Mammary epithelial cell (primary cell): ENCODE measurements at regions of chr14 and their contacts with region 1.

Region 1: GRCh38 chr14:103500148-103500990 is 22.3 kb downstream of the CKB start:
- DNase-seq: peak; percentile 60
- H3K4me3 ChIP-seq: no peak overlapping the region
- H3K27ac ChIP-seq: no peak overlapping the region
- H3K4me1 ChIP-seq: peaks cover 4% of the 10 kb centered on the region
- H3K27me3 ChIP-seq: no peaks in the 10 kb centered on the region
- CTCF ChIP-seq: peak; percentile 95 to 96

Region 2: DNA sequence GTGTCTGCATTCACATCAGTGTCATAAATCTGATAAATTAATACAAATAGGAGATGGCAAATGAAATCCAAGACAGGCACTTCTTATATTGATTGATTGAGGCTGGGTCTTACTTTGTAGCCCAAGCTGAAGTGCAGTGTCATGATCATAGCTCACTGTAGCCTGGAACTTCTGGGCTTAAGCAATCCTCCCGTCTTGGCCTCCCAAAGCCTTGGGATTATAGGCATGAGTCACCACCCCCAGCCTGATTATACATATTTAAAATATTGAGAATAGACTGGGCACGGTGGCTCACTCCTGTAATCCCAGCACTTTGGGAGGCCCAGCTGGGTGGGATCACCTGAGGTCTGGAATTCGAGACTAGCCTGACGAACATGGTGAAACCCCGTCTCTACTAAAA is 63.8 kb before region 1 on chr14:
- CTCF ChIA-PET with region 1: no interaction called
- dilution Hi-C with region 1: no loop called
- in situ Hi-C with region 1: no loop called
- intact Hi-C with region 1: no loop called
- DNase-seq: peak; percentile 30
- H3K4me3 ChIP-seq: no peak overlapping the region
- H3K27ac ChIP-seq: no peak overlapping the region
- H3K4me1 ChIP-seq: no peaks in the 10 kb centered on the region
- H3K27me3 ChIP-seq: no peaks in the 10 kb centered on the region
- CTCF ChIP-seq: no peak

Region 3: GRCh38 chr14:103546652-103547454 is 46.5 kb after region 1 on chr14:
- CTCF ChIA-PET with region 1: no interaction called
- dilution Hi-C with region 1: no loop called
- in situ Hi-C with region 1: no loop called
- intact Hi-C with region 1: loop called (anchors 1 kb)
- DNase-seq: peak; percentile 46
- H3K4me3 ChIP-seq: no peak overlapping the region
- H3K27ac ChIP-seq: no peak overlapping the region
- H3K4me1 ChIP-seq: peaks cover 36% of the 10 kb centered on the region
- H3K27me3 ChIP-seq: no peaks in the 10 kb centered on the region
- CTCF ChIP-seq: peak; percentile 70 to 86

Region 4: DNA sequence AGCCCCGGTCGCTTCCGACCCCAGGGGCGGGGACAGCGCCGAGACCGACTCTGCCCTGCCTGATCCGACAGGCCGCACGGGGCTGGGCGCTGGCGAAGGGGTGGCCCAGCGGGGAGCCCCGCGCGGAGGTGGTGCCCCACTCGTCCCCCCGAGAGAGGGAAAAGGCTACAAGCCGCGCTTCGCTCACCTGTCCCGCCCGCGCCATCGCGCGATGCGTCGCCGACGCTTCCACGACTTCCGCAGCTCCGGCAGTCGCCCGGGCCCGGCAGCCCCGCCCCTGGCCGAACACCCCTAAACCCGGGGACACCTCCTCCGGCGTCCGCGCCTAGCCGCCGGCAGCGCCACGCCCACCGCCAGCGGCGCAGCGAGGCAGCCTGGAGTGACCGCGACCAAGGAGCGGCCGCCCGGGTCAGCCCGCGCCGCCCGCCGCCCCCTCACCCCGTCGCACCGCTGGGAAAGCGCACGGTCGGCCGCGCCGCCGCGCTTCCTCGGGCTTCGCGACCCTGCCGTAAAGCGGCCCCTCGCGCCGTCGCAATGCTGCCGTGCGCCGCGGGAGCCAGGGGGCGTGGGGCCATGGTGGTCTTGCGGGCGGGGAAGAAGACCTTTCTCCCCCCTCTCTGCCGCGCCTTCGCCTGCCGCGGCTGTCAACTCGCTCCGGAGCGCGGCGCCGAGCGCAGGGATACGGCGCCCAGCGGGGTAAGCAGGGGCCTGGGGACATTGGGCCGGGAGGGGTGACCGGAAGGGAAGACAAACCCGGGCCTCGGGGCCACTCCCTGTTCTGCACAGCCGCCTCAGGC is 62.3 kb after region 1 on chr14 and contains the starts of genes BAG5 and COA8:
- CTCF ChIA-PET with region 1: no interaction called
- dilution Hi-C with region 1: no loop called
- in situ Hi-C with region 1: loop called in 1 of 2 experiments (anchors 5 kb)
- intact Hi-C with region 1: no loop called
- DNase-seq: peak; percentile 83
- H3K4me3 ChIP-seq: peak within 1 kb of the TSS; percentile 87 to 97 (median 96)
- H3K27ac ChIP-seq: peak within 1 kb of the TSS; percentile 82
- H3K4me1 ChIP-seq: peaks cover 16% of the 10 kb centered on the region
- H3K27me3 ChIP-seq: no peaks in the 10 kb centered on the region
- CTCF ChIP-seq: no peak
- total RNA-seq, gene BAG5: 31.3 to 39.0 TPM
- total RNA-seq, gene COA8: 22.3 to 49.3 TPM